Gastrocnemius medialis (tissue), 4 donors: ENCODE measurements at regions of chr19 and their contacts with region 1.

Region 1: DNA sequence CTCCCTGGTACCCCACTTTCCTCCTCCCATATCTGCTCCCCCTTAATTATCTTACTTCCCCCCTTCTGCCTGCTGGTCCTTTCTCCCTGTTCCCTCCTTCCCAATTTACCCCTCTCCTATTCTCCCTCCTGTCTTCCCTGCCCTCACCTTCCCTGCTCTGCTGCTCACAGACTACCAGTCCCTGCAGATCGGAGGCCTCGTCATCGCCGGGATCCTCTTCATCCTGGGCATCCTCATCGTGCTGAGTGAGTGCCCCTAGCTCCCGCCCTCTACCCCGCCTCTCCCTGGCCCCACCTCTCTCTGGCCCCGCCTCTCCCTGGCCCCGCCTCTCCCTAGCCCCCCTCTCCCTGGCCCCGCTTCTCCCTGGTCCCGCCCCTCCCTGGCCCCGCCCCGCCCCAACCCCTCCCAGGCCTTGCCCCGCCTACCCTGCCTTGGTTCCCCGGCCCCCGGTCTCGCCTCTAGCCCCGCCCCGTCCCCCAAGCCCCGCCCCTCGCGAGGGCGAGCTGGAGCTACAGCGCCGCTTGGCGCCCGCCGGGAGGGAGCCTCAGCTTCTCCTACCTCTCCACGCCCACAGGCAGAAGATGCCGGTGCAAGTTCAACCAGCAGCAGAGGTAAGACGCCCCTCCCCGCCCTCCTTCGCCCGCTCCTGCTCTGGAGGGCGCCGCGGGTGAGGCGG is 2.0 kb upstream of the FXYD7 start:
- DNase-seq: peak; percentile 92 to 94
- ATAC-seq: peak; percentile 44 to 51
- H3K4me3 ChIP-seq: peak overlapping the region; percentile 43 to 73 (median 64)
- H3K27ac ChIP-seq: peak overlapping the region; percentile 99 to 100 (median 99)
- H3K4me1 ChIP-seq: peaks cover 33 to 38% of the 10 kb centered on the region in 2 donors
- H3K27me3 ChIP-seq: no peaks in the 10 kb centered on the region
- CTCF ChIP-seq: peak; percentile 7 to 76 (median 54)
- POLR2A ChIP-seq: peak; percentile 88 to 94

Region 2: DNA sequence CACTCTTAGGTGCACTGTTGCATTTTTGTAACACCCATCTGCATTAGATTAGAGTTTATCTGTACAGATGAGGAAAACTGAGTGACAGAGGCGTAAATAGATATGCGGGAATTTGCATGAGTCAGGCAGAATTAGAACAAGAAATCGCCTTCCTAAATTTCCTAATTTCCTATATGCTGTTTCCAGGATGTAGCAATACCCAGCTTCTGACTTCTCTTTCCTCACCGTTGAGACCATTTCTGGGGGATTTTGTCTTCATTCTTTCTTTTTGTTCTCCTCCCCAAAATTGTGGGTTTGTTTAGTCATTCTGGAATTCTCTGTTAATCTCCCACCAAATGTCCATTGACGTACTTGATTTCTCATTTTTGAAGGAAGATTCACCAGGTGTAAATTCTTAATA is 166.5 kb before region 1 on chr19:
- in situ Hi-C with region 1: no loop called
- intact Hi-C with region 1: loop called (anchors 5 kb)
- DNase-seq: no peak
- ATAC-seq: no peak
- H3K4me3 ChIP-seq: no peak overlapping the region
- H3K27ac ChIP-seq: no peak overlapping the region
- H3K4me1 ChIP-seq: peaks cover 3 to 7% of the 10 kb centered on the region in 2 donors
- H3K27me3 ChIP-seq: no peaks in the 10 kb centered on the region
- CTCF ChIP-seq: no peak
- POLR2A ChIP-seq: no peak

Region 3: DNA sequence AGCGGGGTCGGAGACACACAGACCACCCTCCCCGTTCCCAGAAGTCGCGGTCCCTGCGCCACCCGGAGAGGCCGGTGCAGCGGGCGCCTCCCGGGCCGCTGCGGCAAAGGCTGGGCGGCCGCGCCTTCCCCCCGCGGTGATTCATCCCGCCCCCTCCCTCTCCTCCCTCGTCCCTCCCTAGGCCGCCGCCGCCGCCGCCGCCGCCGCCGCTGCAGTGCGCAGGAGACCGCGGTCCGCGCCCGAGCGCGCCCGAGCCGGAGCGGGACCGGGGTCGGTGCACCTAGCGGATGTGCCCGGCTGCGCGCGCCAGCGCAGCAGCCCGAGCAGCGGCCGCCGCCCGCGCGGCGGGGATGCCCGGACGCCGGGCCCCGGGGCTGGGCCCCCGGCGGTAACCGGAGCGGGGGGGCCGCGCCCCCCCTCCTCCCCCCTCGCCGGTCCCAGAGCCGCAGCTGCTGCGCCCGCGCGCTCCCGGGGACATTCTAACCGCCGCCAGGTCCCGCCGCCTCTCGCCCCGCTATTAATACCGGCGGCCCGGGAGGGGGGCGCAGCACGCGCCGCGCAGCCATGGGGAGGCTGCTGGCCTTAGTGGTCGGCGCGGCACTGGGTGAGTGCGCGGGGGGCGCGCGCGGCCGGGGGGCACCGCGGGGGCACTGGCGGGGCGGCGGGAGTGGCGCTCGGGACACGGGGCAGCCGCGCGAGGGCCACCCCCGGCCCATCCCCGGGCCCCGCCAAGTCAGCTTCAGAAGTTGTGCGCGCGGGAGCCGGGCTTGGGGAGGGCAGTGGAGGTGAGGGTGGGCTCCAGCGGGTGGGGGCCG is 110.6 kb before region 1 on chr19 and contains the start of gene SCN1B:
- in situ Hi-C with region 1: no loop called
- intact Hi-C with region 1: loop called (anchors 1 kb)
- DNase-seq: peak; percentile 61 to 80
- ATAC-seq: peak; percentile 60 to 67
- H3K4me3 ChIP-seq: peak within 1 kb of the TSS; percentile 55 to 78 (median 68)
- H3K27ac ChIP-seq: peak within 1 kb of the TSS; percentile 97 to 98 (median 98)
- H3K4me1 ChIP-seq: peaks cover 61 to 62% of the 10 kb centered on the region in 2 donors
- H3K27me3 ChIP-seq: no peaks in the 10 kb centered on the region
- CTCF ChIP-seq: no peak
- POLR2A ChIP-seq: peak; percentile 74 to 81
- total RNA-seq, gene SCN1B: 194 to 469 (median 289) TPM

Region 4: GRCh38 chr19:35066691-35067563 is 74.2 kb before region 1 on chr19:
- in situ Hi-C with region 1: loop called in 2 of 4 experiments (anchors 5 to 10 kb)
- intact Hi-C with region 1: loop called (anchors 1 kb)
- DNase-seq: peak; percentile 72 to 84
- ATAC-seq: peak; percentile 59 to 79
- H3K4me3 ChIP-seq: no peak overlapping the region
- H3K27ac ChIP-seq: peak overlapping the region; percentile 52 to 80 (median 60)
- H3K4me1 ChIP-seq: peaks cover 22 to 34% of the 10 kb centered on the region in 2 donors
- H3K27me3 ChIP-seq: no peaks in the 10 kb centered on the region
- CTCF ChIP-seq: peak; percentile 89 to 96 (median 94)
- POLR2A ChIP-seq: peak in 1 of 2 donors; percentile 36

Region 5: GRCh38 chr19:35740423-35741202 is 599.5 kb after region 1 on chr19:
- in situ Hi-C with region 1: no loop called
- intact Hi-C with region 1: loop called (anchors 10 kb)
- DNase-seq: peak; percentile 96 to 98
- ATAC-seq: peak; percentile 74
- H3K4me3 ChIP-seq: peak overlapping the region; percentile 52 to 88 (median 78)
- H3K27ac ChIP-seq: peak overlapping the region; percentile 77 to 86 (median 82)
- H3K4me1 ChIP-seq: peaks cover 20 to 26% of the 10 kb centered on the region in 2 donors
- H3K27me3 ChIP-seq: no peaks in the 10 kb centered on the region
- CTCF ChIP-seq: peak in 3 of 5 experiments; percentile 9 to 34 (median 24)
- POLR2A ChIP-seq: peak in 1 of 2 donors; percentile 56